ENCODE measurements at regions of chr19 and their contacts with region 1.

Region 1: DNA sequence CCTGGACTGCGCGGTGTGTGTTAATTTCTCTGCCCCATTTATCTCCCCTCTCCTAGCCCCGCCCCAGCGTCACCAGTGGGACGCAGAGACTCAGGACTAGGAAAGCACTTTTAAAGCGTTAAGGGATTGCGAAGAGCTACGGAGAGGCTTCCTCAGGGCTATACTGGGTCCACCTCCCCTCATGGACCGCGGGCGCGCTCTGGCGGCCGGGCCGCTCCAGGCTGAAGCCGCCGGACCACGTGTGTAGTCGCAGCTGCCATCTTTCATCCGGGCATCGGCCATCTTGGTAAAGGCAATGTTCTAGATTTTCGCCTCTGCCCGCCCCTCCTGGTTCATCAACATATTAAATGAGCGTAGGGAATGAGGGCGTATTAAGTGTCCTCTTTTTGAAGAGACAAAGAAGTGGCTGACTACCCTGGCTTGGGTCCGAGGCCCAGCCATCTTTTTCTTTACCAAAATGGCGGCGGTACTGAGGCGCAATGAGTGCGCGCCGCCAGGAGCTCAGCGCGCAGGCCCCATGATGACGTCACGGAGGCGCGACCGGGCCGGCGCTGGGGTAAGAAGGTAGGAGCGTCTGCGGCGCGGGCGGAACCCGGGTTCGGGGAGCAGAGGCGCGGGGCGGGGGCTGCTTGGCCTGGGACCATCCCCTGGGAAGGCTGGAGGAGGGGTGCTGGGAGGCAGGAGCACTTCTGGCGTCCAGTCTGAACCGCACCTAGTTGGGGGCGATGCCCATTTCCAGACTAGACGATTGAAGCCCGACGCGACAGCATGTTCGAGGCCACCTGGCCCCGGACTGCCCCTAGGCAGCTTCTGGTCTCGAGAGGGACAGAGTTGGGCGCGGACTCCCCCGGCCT is at the start of gene CCDC124:
- DNase-seq: peak; percentile 95
- H3K4me3 ChIP-seq: peak within 1 kb of the TSS; percentile 71 to 85
- H3K27ac ChIP-seq: peak within 1 kb of the TSS; percentile 80 to 86
- H3K4me1 ChIP-seq: peaks cover 0 to 10% of the 10 kb centered on the region in 2 experiments; a peak in 1 of 4 replicates
- H3K27me3 ChIP-seq: no peaks in the 10 kb centered on the region
- CTCF ChIP-seq: peak; percentile 93
- EP300 ChIP-seq: no peak
- RAD21 ChIP-seq: peak; percentile 83
- polyA plus RNA-seq, gene CCDC124: 157 and 231 TPM in 2 replicates

Region 2: GRCh38 chr19:17817668-17818363 is 114.9 kb before region 1 on chr19:
- CTCF ChIA-PET with region 1: no interaction called
- POLR2A ChIA-PET with region 1: no interaction called
- DNase-seq: no peak
- H3K4me3 ChIP-seq: no peak overlapping the region
- H3K27ac ChIP-seq: no peak overlapping the region
- H3K4me1 ChIP-seq: no peaks in the 10 kb centered on the region
- H3K27me3 ChIP-seq: no peaks in the 10 kb centered on the region
- CTCF ChIP-seq: no peak
- EP300 ChIP-seq: no peak
- RAD21 ChIP-seq: no peak

Region 3: GRCh38 chr19:17859533-17860330 is 73.0 kb before region 1 on chr19 and contains the start of gene RPL18A:
- CTCF ChIA-PET with region 1: interaction called, 139 read pairs
- POLR2A ChIA-PET with region 1: interaction called, 27 read pairs
- DNase-seq: peak; percentile 96
- H3K4me3 ChIP-seq: peak within 1 kb of the TSS; percentile 86 to 91
- H3K27ac ChIP-seq: peak within 1 kb of the TSS; percentile 62 to 78
- H3K4me1 ChIP-seq: peaks cover 0 to 17% of the 10 kb centered on the region in 2 experiments; a peak in 1 of 4 replicates
- H3K27me3 ChIP-seq: no peaks in the 10 kb centered on the region
- CTCF ChIP-seq: peak; percentile 78
- EP300 ChIP-seq: no peak
- RAD21 ChIP-seq: peak; percentile 64
- polyA plus RNA-seq, gene RPL18A: 2,138 and 2,695 TPM in 2 replicates

Region 4: DNA sequence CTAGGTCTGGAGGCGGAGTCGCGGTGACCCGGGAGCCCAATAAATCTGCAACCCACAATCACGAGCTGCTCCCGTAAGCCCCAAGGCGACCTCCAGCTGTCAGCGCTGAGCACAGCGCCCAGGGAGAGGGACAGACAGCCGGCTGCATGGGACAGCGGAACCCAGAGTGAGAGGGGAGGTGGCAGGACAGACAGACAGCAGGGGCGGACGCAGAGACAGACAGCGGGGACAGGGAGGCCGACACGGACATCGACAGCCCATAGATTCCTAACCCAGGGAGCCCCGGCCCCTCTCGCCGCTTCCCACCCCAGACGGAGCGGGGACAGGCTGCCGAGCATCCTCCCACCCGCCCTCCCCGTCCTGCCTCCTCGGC is 60.8 kb before region 1 on chr19 and contains the start of gene SLC5A5:
- CTCF ChIA-PET with region 1: interaction called, 139 read pairs
- POLR2A ChIA-PET with region 1: no interaction called
- DNase-seq: peak; percentile 64
- H3K4me3 ChIP-seq: no peak within 1 kb of the TSS
- H3K27ac ChIP-seq: no peak within 1 kb of the TSS
- H3K4me1 ChIP-seq: peaks cover 0 to 5% of the 10 kb centered on the region in 2 experiments; a peak in 1 of 4 replicates
- H3K27me3 ChIP-seq: peaks cover 25% of the 10 kb centered on the region
- CTCF ChIP-seq: no peak
- EP300 ChIP-seq: no peak
- RAD21 ChIP-seq: no peak
- polyA plus RNA-seq, gene SLC5A5: 0.02 TPM in 2 replicates

Region 5: GRCh38 chr19:17922138-17922537 is 10.6 kb before region 1 on chr19:
- CTCF ChIA-PET with region 1: interaction called, 16 read pairs
- POLR2A ChIA-PET with region 1: no interaction called
- DNase-seq: no peak
- H3K4me3 ChIP-seq: no peak overlapping the region
- H3K27ac ChIP-seq: no peak overlapping the region
- H3K4me1 ChIP-seq: no peaks in the 10 kb centered on the region
- H3K27me3 ChIP-seq: no peaks in the 10 kb centered on the region; the same call in 1 of the 2 replicates
- CTCF ChIP-seq: no peak
- EP300 ChIP-seq: no peak
- RAD21 ChIP-seq: no peak

Region 6: DNA sequence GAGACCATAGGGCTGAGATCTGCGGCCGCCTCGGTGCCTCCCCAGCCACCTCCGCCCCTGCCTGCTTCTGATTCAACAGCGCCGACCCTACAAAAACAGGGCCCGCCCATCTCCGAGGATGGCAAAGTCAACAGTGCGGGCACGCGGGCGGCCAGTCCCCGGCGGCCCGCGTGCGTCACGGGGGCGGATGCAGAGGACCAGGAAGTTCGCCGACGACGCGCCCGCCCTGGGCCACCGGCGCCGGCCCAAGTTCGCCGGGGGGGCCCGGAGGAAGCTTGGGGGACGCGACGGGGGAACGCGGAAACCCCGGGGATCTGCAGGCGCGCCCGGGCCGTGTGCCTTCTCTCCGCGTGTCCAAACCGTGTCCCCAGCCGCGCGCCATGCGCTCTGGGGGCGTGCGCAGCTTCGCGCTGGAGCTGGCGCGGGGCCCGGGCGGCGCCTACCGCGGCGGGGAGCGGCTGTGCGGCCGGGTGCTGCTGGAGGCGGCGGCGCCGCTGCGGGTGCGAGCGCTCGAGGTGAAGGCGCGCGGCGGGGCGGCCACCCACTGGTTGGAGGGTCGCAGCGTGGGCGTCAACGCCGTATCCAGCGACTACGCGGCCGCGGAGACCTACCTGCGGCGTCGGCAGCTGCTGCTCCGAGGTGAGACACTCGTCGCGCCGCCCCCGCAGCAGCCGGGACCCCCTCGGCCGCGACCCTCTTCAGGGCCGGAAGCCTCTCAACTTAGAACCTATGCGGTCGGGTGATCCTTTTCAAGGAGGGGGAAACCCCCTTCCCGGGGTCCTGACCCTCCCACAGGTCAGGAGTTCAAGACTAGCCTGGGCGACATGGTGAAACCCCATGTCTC is 68.4 kb after region 1 on chr19:
- CTCF ChIA-PET with region 1: interaction called, 464 read pairs
- POLR2A ChIA-PET with region 1: interaction called, 6 read pairs
- DNase-seq: peak; percentile 92
- H3K4me3 ChIP-seq: peak overlapping the region; percentile 63 to 78
- H3K27ac ChIP-seq: peak overlapping the region in 1 of 2 experiments; percentile 24; a peak in 1 of 4 replicates
- H3K4me1 ChIP-seq: peaks cover 0 to 4% of the 10 kb centered on the region in 2 experiments; a peak in 1 of 4 replicates
- H3K27me3 ChIP-seq: no peaks in the 10 kb centered on the region
- CTCF ChIP-seq: no peak
- EP300 ChIP-seq: no peak
- RAD21 ChIP-seq: no peak

Region 7: DNA sequence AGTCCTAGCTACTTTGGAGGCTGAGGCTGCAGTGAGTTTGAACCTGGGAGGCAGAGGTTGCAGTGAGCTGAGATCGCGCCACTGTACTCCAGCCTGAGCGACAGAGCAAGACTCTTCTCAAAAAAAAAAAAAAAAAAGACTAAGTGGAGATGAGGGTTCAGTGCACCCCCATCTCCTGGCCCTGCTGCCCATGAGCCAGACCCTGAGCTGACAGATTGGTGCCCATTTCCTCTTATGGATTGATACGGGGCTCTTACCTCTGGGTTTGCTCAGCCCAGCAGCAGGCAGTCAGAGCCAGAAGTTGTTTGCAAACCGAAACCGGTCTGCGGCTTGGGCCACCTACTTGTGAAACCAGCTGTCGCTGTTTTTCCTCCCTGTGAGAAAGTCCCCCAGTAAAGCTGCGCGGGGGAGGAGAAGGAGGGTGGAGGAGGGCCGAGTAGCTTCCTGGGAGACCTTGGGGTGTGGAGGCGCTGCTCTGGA is 112.2 kb after region 1 on chr19:
- CTCF ChIA-PET with region 1: no interaction called
- POLR2A ChIA-PET with region 1: no interaction called
- DNase-seq: no peak
- H3K4me3 ChIP-seq: peak overlapping the region in 1 of 2 experiments; percentile 28; a peak in 1 of 4 replicates
- H3K27ac ChIP-seq: no peak overlapping the region
- H3K4me1 ChIP-seq: no peaks in the 10 kb centered on the region; a peak in 1 of 4 replicates
- H3K27me3 ChIP-seq: peaks cover 8% of the 10 kb centered on the region; the same call in 1 of the 2 replicates
- CTCF ChIP-seq: no peak
- EP300 ChIP-seq: no peak
- RAD21 ChIP-seq: no peak

Region 8: GRCh38 chr19:18328340-18329034 is 395.8 kb after region 1 on chr19:
- CTCF ChIA-PET with region 1: no interaction called
- POLR2A ChIA-PET with region 1: no interaction called
- DNase-seq: peak; percentile 94
- H3K4me3 ChIP-seq: peak overlapping the region; percentile 39 to 52
- H3K27ac ChIP-seq: peak overlapping the region; percentile 63 to 84
- H3K4me1 ChIP-seq: peaks cover 10 to 14% of the 10 kb centered on the region in 2 experiments; a peak in 2 of 4 replicates
- H3K27me3 ChIP-seq: no peaks in the 10 kb centered on the region
- CTCF ChIP-seq: peak; percentile 93
- EP300 ChIP-seq: peak in 1 of 2 experiments; percentile 53; a peak in 2 of 4 replicates
- RAD21 ChIP-seq: peak; percentile 90

Measured in SK-N-SH (cell line).